Right lobe of liver (tissue), 6 donors: ENCODE measurements at regions of chr5 and their contacts with region 1.

Region 1: DNA sequence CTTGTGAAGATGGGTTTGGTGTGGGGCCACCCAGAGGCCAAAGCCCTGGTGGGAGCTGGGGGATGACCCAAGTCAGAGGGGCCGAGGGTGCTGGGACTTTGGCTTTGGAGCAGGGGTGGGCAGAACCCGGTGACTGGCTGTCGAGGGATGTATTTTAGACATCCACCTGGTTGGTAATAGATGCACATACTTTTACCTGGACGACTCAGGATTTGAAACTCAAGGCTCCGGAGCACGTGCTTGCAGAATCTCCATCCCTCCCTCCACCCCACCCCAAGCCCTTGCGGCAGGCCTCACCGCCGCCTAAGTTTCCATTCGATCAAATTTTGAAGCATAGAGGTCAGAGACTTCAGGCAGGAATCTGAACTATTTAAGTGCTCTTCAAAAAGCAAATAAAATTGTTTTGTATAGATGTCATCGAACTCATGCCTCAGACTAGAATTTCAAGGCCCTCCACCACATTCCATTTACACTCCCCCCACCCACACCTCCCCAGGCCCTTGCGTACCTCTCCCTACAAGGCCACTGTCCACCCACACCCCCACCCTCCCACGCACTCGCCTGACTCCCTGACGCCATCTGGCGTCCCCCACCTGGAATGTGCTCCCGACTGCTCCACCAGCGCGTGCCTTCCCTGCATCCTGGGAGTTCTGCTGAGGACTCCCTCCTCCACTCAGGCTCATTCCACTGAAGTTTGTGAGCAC is 56.6 kb upstream of the RPL26L1 start:
- DNase-seq: peak; percentile 85 to 89 (median 86)
- ATAC-seq: peak; percentile 60 to 75 (median 64)
- H3K4me3 ChIP-seq: no peak overlapping the region
- H3K27ac ChIP-seq: peak overlapping the region; percentile 86 to 97 (median 95)
- H3K4me1 ChIP-seq: peaks cover 5 to 77% (median 42%) of the 10 kb centered on the region in 4 donors
- H3K27me3 ChIP-seq: no peaks in the 10 kb centered on the region
- CTCF ChIP-seq: peak; percentile 29 to 55 (median 44)
- POLR2A ChIP-seq: no peak

Region 2: DNA sequence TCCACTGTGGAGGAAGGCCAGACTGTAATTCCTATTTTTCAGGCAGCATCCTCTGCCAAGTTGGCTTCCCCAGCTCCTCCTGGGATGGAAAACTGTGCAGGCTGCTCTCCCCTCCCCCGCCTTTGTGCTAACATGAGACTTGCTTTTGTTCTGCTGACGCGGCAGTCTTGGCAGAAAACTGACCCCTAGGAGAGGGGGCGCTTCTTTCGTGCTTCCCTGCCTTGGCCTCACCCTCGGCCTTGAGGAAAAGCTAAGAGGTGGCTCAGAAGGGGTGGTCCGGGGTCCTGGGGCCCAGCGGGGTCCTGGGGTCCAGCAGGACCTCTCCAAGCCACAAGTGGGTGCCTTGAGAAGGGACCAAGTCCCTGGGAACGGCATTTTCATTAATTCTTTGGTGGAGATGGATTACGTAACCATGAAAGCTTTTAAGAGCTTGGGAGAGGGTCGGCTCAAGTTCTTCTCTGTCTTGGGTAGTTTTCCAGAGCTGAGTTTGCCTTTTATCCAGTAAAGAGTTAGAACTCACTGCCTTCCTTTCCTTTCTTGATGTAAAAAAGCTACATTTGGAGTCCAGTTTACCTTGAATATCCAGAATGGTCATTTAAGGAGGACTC is 499.4 kb before region 1 on chr5:
- intact Hi-C with region 1: no loop called
- DNase-seq: no peak
- ATAC-seq: peak in 3 of 4 donors; percentile 14 to 38 (median 34)
- H3K4me3 ChIP-seq: no peak overlapping the region
- H3K27ac ChIP-seq: no peak overlapping the region
- H3K4me1 ChIP-seq: no peaks in the 10 kb centered on the region
- H3K27me3 ChIP-seq: no peaks in the 10 kb centered on the region
- CTCF ChIP-seq: no peak
- POLR2A ChIP-seq: no peak

Region 3: DNA sequence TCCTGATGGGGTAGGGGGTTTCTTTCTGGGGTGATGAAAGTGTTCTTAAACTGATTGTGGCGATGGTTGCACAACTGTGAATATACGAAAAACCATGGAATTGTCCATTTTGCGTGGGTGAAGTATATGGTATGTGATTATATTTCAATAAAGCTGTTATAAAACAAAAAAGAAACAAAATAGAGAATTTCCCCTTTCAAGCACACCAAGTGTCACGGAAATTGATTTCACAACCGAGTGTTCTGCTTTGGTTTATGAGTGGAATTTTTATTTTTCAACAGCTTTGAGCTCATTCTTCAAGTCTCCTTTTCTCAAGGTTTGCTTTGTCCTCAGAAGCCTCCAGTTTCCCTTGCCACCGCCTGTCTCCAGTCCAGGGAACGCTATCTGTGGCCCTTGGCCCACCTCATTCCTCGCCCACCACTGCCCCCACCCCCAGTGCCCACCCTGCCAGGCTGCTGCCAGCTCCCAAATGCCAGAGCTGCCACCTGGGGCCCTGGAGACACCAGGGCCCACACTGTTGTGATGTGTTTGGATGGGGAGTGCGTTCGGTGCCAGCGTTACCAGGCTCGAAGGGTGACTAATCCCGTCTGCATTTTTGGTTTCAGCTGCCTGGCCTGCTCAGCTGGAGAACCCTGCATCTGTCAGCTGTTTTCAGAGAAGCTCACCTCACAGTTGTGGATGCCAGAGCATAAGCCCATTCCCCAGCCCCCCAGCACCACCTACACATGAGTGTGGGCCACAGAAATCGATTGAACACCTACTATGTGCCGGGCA is 162.0 kb before region 1 on chr5:
- intact Hi-C with region 1: no loop called
- DNase-seq: no peak
- ATAC-seq: peak in 3 of 4 donors; percentile 39 to 61 (median 41)
- H3K4me3 ChIP-seq: no peak overlapping the region
- H3K27ac ChIP-seq: peak overlapping the region in 1 of 3 donors; percentile 29
- H3K4me1 ChIP-seq: no peaks in the 10 kb centered on the region
- H3K27me3 ChIP-seq: no peaks in the 10 kb centered on the region
- CTCF ChIP-seq: no peak
- POLR2A ChIP-seq: no peak

Region 4: DNA sequence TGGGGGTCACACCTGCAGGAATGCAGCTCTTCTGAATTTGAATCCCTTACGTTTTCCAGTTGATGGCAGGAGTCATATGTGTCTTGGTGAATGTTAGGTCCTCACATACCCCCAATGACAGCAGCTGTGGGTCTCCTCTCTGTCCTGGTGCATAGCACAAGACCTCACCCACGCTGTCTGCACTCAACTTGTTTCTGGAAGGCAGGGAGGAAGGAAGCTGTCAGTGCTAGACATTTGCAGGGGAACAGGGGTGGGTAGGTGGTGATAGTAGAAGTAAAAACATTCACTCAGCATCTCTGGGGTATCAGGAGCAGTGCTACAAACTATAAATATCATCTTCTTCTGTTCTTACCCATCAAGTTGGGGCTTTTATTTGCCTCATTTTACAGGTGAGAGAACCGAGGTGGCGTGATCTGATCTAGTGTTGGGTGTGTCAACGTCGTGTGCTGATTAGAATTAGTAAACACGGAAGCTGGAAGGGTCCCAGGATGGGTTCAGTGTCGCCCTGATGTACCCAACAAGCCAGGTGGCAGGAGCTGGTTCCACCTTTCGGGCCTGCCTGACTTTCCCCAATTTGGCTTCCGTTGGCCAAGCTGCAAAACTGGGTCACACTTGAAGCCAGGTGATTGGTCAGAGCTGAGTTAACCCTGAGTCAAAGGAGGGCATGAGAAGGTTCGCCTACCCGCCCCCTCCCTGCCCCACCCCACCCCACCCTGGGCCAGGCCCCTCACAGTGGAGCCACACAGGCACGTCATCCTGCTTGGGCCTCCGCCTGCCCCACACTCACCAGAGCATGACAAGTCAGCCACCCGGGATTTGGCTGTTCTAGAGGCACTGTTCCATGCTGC is 52.8 kb before region 1 on chr5:
- intact Hi-C with region 1: loop called (anchors 5 to 10 kb)
- DNase-seq: peak in 2 of 3 donors; percentile 69 to 72
- ATAC-seq: peak in 2 of 4 donors; percentile 1 to 39
- H3K4me3 ChIP-seq: no peak overlapping the region
- H3K27ac ChIP-seq: peak overlapping the region; percentile 31 to 92 (median 59)
- H3K4me1 ChIP-seq: peaks cover 0 to 60% (median 26%) of the 10 kb centered on the region in 4 donors
- H3K27me3 ChIP-seq: no peaks in the 10 kb centered on the region
- CTCF ChIP-seq: no peak
- POLR2A ChIP-seq: no peak

Region 5: GRCh38 chr5:172858990-172859811 is 43.4 kb before region 1 on chr5:
- intact Hi-C with region 1: loop called (anchors 5 to 10 kb)
- DNase-seq: peak; percentile 71 to 87 (median 81)
- ATAC-seq: peak; percentile 25 to 46 (median 40)
- H3K4me3 ChIP-seq: peak overlapping the region in 1 of 3 donors; percentile 34
- H3K27ac ChIP-seq: peak overlapping the region; percentile 87 to 89 (median 89)
- H3K4me1 ChIP-seq: peaks cover 8 to 77% (median 43%) of the 10 kb centered on the region in 4 donors
- H3K27me3 ChIP-seq: no peaks in the 10 kb centered on the region
- CTCF ChIP-seq: peak in 1 of 4 donors; percentile 4
- POLR2A ChIP-seq: peak; percentile 69